Posterior cingulate gyrus (tissue), 11 donors: ENCODE measurements at regions of chrX and their contacts with region 1.

Region 1: DNA sequence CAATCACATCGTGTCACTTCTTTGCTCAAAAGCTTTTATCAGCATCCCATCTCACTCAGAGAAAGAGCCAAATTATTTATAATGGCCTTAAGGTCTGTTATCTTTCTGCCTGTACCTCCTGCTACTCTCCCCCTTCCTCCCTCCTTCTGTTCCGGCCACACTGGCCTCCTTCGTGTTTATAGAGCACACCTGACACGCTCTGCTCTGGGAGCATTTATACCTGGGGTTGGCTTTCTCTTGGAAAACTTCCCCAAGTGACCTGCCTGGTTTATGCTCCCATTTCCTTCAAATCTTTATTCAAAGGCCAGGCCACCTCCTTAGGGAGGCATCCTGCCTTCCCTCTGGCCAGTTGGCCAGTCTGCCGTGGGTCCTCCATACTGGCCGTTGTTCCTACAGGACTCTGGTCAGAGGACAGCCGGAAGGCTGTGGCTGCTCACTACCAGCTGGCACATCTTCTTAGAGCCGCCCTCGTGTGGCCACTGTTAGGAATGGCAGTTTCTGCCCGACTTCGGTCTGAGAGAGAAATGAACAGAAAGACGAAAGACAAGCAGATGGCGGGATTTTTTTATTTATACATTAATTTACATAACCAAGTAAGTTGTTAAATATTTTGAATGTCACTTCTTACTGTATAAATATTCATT is 80.2 kb upstream of the CBLL2 start:
- DNase-seq: peak; percentile 19 to 95 (median 58)

Region 2: DNA sequence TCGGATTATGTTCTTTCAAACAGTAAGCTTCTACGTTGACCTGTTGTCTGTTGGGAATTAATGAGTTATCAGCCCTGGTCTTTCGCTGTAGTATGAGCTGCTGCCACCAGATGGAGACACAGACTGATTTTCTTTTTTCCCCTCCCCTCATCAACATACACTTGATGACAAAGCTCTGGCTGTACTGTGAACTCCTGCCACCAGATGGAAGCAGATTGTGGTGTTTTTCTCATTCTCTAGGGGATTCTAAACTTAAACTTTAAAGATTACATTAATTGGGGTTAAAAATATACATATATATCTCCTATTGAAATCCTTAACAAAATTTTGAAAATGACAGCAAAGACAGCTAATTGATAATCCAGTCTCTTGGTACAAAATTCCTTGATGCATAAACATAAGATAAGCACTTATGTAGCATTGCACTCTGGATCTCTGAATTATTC is 207.2 kb before region 1 on chrX:
- intact Hi-C with region 1: loop called (anchors 5 kb)
- DNase-seq: peak in 6 of 10 donors; percentile 37 to 77 (median 54)